Right ventricle myocardium superior (tissue), 1 donor: ENCODE measurements at regions of chr17 and their contacts with region 1.

Region 1: DNA sequence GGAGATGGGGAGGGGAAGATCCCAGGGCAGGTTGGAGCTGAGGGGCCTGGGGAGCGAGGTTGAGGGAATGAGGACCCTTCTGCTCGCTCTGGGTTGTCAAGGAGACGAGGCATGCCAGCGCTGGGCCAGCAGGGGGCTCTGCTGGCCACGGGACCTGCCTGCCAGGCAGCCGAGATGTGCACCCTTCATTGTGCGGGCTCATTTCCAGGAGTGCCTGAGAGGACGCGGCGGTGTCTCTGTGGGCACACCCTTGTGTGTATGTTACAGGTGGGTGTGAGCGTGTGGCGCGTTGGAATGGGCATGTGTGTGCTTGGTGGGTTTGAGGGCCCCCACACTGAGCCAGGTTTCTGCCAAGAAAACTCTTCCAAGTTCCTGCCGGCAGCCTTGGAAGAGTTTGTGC is 15.9 kb downstream of the ARHGAP23 start:
- DNase-seq: peak; percentile 84
- ATAC-seq: peak; percentile 66

Region 2: GRCh38 chr17:38358586-38359513 is 85.3 kb before region 1 on chr17:
- intact Hi-C with region 1: no loop called
- DNase-seq: no peak
- ATAC-seq: peak; percentile 57

Region 3: GRCh38 chr17:38476544-38476943 is 32.4 kb after region 1 on chr17:
- intact Hi-C with region 1: loop called (anchors 5 kb)
- DNase-seq: peak; percentile 35
- ATAC-seq: no peak